ENCODE measurements at regions of chrX and their contacts with region 1.

Region 1: DNA sequence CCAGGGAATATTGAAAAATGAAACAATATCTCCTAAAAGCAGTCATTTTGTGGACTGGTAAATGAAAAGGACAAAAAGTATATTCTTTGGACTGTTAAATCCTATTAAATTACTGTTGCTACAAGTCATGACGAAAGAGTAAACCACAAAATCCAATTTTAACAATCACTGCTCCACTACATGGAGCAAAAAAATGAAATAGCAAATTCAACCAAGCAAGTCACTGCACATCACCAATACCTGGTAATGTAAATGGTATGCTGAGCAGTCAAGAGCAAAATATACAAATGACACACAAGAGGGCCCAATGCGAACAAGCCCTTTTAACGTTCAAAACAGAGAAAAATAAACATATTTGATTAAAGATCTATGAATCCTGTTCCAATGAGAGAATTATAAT is 126.2 kb downstream of the KLHL13 start:
- DNase-seq: no peak
- ATAC-seq: no peak
- H3K4me3 ChIP-seq: no peak overlapping the region
- H3K27ac ChIP-seq: no peak overlapping the region
- H3K4me1 ChIP-seq: peaks cover 14% of the 10 kb centered on the region
- H3K27me3 ChIP-seq: no peaks in the 10 kb centered on the region
- CTCF ChIP-seq: no peak

Region 2: DNA sequence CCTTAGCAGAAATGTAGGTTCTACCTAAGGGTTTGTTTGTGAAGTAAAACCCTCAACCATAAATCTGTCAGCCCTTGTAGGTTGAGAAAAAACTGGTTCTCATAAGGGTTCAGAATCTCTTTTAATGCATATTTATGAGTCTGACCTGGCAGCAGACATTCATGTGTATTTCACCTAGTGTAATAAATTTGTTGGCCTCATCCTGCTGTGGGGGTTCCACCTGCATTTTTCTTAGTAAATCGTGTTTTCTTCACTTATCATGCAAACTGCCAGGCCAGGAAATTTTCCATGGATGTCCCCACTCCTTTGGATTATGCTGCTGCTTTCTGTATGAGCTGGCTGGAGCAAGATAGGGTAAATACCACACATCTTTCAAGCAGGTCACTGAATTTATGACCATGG is 83.8 kb after region 1 on chrX:
- CTCF ChIA-PET with region 1: no interaction called
- POLR2A ChIA-PET with region 1: no interaction called
- intact Hi-C with region 1: no loop called
- DNase-seq: no peak
- ATAC-seq: no peak
- H3K4me3 ChIP-seq: no peak overlapping the region
- H3K27ac ChIP-seq: no peak overlapping the region
- H3K4me1 ChIP-seq: no peaks in the 10 kb centered on the region
- H3K27me3 ChIP-seq: no peaks in the 10 kb centered on the region
- CTCF ChIP-seq: no peak

Region 3: DNA sequence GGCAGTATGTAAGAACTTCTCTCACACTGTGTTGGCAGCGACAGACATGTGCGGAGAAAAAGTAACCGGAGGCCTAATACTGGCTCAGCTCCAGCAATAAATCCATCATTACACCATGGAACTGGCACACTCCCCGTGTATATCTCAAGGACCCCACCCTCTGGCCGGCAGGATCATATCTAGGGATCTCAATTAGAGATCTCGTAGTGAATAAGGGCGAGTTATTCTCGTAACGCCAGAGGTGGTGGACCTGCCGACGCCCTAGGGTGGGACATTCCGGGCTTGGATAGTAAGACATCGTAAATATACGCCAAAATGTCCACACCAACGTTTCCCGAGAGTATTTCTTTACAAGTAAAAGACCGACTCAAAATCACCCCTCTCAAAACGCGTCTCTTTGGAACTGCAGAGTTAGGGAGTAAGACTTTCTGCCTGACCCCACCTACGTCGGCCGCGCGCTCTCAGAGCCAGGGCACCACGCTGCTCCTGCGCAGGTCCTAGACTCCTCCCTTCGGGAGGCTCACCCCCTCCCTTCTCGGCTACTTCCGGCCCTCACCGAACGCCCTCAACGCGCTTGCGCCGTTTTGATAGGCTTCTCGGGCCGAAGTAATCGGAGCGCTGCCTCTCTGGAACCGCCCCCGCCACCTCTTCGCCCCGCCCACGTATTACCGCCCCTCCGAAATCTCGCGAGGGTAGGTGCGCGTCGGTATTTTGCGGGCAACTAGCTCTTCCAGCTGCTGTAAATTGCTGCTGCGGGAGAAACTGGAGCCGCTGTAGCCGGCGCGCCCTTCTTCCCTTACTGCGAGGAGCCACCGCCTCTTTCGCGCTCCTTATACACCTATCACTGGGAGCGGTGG is 355.2 kb after region 1 on chrX and contains the start of gene WDR44:
- CTCF ChIA-PET with region 1: no interaction called
- POLR2A ChIA-PET with region 1: no interaction called
- intact Hi-C with region 1: loop called (anchors 5 kb)
- DNase-seq: peak; percentile 96
- ATAC-seq: peak; percentile 86
- H3K4me3 ChIP-seq: peak within 1 kb of the TSS; percentile 96
- H3K27ac ChIP-seq: peak within 1 kb of the TSS; percentile 100
- H3K4me1 ChIP-seq: peaks cover 20% of the 10 kb centered on the region
- H3K27me3 ChIP-seq: no peaks in the 10 kb centered on the region
- CTCF ChIP-seq: no peak
- total RNA-seq, gene WDR44: 10.5 and 16.2 TPM in 2 replicates

Region 4: DNA sequence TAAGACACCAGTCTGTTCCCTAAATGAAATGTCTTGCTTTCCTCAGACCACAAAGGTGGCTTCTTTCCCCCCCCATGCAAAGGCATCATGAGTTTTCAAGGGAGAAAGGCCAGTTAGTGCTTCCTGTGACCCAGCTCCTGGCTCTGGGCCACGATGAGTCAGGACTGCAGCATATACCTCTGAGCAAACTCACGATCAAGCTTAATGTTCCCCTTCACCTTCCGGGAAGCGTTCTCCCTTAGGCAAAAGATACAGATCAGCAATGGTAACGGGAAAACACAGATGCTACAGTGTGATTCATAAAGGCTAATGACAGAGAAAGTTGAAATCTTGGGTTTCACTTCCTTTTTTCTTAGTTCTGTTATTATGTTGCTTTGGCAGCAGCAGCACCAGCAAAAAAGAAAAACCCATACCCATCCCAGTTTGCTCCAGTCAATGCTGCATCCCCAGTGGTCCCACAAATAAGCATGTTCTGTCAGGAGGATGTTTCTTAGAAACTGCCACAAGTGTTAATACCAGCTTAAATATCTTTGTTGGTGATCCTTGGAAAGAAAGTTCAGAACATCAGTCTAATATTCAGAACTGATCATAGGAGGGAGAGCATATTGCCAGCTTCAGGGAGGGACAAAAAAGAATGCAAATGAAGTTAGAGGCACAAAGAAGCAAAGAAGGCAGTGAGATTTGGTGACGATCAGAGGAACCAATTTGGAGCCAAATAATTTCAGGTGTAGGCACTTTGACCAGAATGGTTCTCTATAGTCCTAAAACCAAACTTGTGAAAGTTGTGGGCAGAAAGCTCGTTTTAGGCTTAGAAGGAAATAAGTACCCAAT is 1025.2 kb after region 1 on chrX:
- CTCF ChIA-PET with region 1: no interaction called
- POLR2A ChIA-PET with region 1: interaction called, 10 read pairs
- intact Hi-C with region 1: no loop called
- DNase-seq: peak; percentile 98
- ATAC-seq: peak; percentile 88
- H3K4me3 ChIP-seq: no peak overlapping the region
- H3K27ac ChIP-seq: peak overlapping the region; percentile 100
- H3K4me1 ChIP-seq: peaks cover 41% of the 10 kb centered on the region
- H3K27me3 ChIP-seq: no peaks in the 10 kb centered on the region
- CTCF ChIP-seq: no peak

Region 5: DNA sequence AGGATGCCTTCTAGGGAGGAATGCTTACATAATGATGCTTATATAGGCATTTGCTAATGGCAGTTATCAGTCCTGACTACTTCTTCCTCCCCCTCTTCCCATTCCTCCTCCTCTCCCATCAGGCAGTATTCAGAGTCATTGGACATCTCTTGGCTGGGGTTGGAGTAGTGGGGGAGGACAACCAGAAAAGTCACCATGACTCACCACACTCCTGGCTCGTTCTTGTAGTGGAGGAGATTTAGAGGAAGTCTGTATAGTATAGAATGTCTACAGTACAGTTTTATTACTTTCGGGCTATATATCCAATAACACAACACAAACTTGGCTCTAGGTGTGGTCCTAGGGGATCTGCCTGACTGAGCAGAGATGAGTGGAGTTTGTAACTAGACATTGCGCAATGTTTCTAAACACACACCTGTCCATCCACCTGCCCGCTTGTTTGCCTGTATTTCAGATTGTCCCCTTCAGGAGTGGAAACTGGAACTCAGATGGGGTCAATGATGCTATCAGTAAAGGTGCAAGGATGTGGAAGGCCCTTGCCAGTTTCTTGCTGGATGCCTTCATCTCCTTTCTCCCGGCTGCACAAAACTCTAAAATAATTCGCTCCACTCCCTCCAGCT is 1165.1 kb after region 1 on chrX:
- CTCF ChIA-PET with region 1: no interaction called
- POLR2A ChIA-PET with region 1: no interaction called
- intact Hi-C with region 1: no loop called
- DNase-seq: peak; percentile 95
- ATAC-seq: peak; percentile 99
- H3K4me3 ChIP-seq: no peak overlapping the region
- H3K27ac ChIP-seq: no peak overlapping the region
- H3K4me1 ChIP-seq: peaks cover 17% of the 10 kb centered on the region
- H3K27me3 ChIP-seq: no peaks in the 10 kb centered on the region
- CTCF ChIP-seq: no peak

Measured in PC-3 (cell line).